ENCODE measurements at regions of chr15 and their contacts with region 1.

Region 1: GRCh38 chr15:91852741-91853510 is 582 bp upstream of the SLCO3A1 start:
- DNase-seq: peak; percentile 39 to 87 (median 67)
- ATAC-seq: peak; percentile 67 to 73 (median 69)
- H3K4me3 ChIP-seq: peak overlapping the region; percentile 77 to 80
- H3K4me3 Mint-ChIP-seq: peak overlapping the region; percentile 77 to 86 (median 84)
- H3K27ac ChIP-seq: peak overlapping the region; percentile 83
- H3K27ac Mint-ChIP-seq: peak overlapping the region; percentile 84 to 90
- H3K4me1 ChIP-seq: peaks cover 40 to 55% of the 10 kb centered on the region in 2 experiments
- H3K4me1 Mint-ChIP-seq: peaks cover 58 to 70% (median 63%) of the 10 kb centered on the region in 3 donors
- H3K27me3 ChIP-seq: no peaks in the 10 kb centered on the region
- H3K27me3 Mint-ChIP-seq: no peaks in the 10 kb centered on the region

Region 2: DNA sequence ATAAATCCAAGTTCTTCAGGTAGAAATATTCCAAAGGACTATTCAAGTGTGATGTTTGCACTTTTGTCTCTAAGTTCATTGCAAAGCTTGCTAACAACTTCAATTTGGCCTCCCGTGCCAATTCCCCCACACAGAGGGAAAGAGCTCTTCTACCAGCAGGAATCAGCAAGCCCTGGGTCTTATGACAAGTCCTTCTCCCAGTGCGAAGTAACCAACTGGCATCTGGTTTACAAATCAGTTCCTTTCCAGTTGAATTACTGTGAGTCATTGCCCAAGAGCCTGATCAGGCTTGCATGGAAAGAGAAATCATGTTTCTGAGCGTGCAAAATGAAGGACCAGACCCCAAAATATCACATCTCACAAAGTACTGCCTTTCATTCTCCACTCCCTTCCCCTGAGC is 62.1 kb before region 1 on chr15:
- CTCF ChIA-PET with region 1: no interaction called
- POLR2A ChIA-PET with region 1: no interaction called
- DNase-seq: no peak
- ATAC-seq: no peak
- H3K4me3 ChIP-seq: no peak overlapping the region
- H3K4me3 Mint-ChIP-seq: no peak overlapping the region
- H3K27ac ChIP-seq: no peak overlapping the region
- H3K27ac Mint-ChIP-seq: no peak overlapping the region
- H3K4me1 ChIP-seq: no peaks in the 10 kb centered on the region
- H3K4me1 Mint-ChIP-seq: no peaks in the 10 kb centered on the region
- H3K27me3 ChIP-seq: peaks cover 0 to 7% of the 10 kb centered on the region in 2 experiments
- H3K27me3 Mint-ChIP-seq: peaks cover 11% of the 10 kb centered on the region in 2 donors

Region 3: DNA sequence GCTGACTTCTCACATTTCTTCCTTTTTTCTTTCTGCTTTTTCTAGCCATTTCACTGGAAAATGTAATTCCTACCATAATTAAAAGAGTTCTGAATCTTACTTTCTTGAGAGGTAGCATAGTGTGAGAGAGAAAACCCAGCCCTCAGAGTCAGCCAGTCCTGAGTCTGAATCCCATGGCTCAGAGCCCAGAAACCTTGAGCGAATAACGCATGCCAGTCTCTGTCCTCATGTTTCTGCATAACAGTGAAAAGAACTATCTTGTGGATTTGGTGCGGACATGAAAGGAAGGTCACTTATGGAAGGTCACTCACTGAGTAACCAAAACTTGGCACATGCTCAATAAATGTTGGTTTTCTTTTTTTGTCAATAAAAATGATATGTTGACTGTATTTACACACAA is 28.7 kb before region 1 on chr15:
- CTCF ChIA-PET with region 1: no interaction called
- POLR2A ChIA-PET with region 1: no interaction called
- DNase-seq: no peak
- ATAC-seq: no peak
- H3K4me3 ChIP-seq: no peak overlapping the region
- H3K4me3 Mint-ChIP-seq: no peak overlapping the region
- H3K27ac ChIP-seq: no peak overlapping the region
- H3K27ac Mint-ChIP-seq: no peak overlapping the region
- H3K4me1 ChIP-seq: no peaks in the 10 kb centered on the region
- H3K4me1 Mint-ChIP-seq: no peaks in the 10 kb centered on the region
- H3K27me3 ChIP-seq: peaks cover 0 to 4% of the 10 kb centered on the region in 2 experiments
- H3K27me3 Mint-ChIP-seq: peaks cover 3 to 7% of the 10 kb centered on the region in 2 donors

Region 4: DNA sequence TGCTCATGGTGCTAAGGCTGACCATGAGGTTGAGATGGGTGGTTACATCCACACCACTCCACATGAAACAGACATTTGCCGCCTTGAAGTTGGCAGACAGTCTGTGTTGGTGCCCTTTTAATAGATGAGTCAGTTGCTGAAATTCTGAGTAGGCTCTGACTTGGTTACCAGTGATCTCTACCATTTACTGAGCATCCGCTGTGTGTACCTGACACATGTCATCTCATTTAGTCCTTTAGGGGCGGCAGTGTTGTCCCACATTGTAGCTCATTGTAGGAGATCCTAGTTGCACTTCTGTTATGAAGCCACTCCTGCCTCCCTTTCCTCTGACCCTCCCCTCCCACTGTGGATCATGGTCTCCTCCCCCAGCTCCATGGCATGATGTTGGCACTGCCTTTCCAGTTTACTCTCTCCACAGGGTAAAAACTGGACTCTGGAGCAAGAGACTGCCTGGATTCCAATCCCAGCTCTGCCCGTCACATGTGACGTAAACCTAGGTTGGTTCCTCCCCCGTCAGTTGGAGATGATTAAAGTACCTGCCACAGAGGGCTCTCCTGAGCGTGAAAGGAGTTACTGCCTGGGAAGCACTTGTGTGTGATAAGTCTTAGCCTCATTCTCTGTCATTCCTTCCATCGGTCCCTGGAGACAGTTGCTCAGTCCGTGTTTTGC is 22.2 kb after region 1 on chr15:
- CTCF ChIA-PET with region 1: interaction called in 1 of 2 experiments, 3 read pairs
- POLR2A ChIA-PET with region 1: interaction called in 1 of 2 experiments, 14 read pairs
- DNase-seq: no peak
- ATAC-seq: no peak
- H3K4me3 ChIP-seq: no peak overlapping the region
- H3K4me3 Mint-ChIP-seq: no peak overlapping the region
- H3K27ac ChIP-seq: no peak overlapping the region
- H3K27ac Mint-ChIP-seq: no peak overlapping the region
- H3K4me1 ChIP-seq: peaks cover 2 to 5% of the 10 kb centered on the region in 2 experiments
- H3K4me1 Mint-ChIP-seq: peaks cover 51 to 63% (median 57%) of the 10 kb centered on the region in 3 donors
- H3K27me3 ChIP-seq: no peaks in the 10 kb centered on the region
- H3K27me3 Mint-ChIP-seq: no peaks in the 10 kb centered on the region

Region 5: GRCh38 chr15:91942676-91943576 is 90.0 kb after region 1 on chr15:
- CTCF ChIA-PET with region 1: interaction called, 7 to 12 read pairs
- POLR2A ChIA-PET with region 1: no interaction called
- DNase-seq: peak in 30 of 35 experiments; percentile 6 to 63 (median 38)
- ATAC-seq: peak; percentile 65 to 95 (median 88)
- H3K4me3 ChIP-seq: peak overlapping the region in 1 of 2 donors; percentile 4
- H3K4me3 Mint-ChIP-seq: peak overlapping the region in 2 of 3 donors; percentile 59 to 65
- H3K27ac ChIP-seq: peak overlapping the region; percentile 28
- H3K27ac Mint-ChIP-seq: peak overlapping the region; percentile 74 to 88
- H3K4me1 ChIP-seq: peaks cover 0 to 38% of the 10 kb centered on the region in 2 experiments
- H3K4me1 Mint-ChIP-seq: peaks cover 72 to 85% (median 76%) of the 10 kb centered on the region in 3 donors
- H3K27me3 ChIP-seq: no peaks in the 10 kb centered on the region
- H3K27me3 Mint-ChIP-seq: peaks cover 0 to 4% of the 10 kb centered on the region in 2 donors